Gastrocnemius medialis (tissue), 4 donors: ENCODE measurements at regions of chr7 and their contacts with region 1.

Region 1: DNA sequence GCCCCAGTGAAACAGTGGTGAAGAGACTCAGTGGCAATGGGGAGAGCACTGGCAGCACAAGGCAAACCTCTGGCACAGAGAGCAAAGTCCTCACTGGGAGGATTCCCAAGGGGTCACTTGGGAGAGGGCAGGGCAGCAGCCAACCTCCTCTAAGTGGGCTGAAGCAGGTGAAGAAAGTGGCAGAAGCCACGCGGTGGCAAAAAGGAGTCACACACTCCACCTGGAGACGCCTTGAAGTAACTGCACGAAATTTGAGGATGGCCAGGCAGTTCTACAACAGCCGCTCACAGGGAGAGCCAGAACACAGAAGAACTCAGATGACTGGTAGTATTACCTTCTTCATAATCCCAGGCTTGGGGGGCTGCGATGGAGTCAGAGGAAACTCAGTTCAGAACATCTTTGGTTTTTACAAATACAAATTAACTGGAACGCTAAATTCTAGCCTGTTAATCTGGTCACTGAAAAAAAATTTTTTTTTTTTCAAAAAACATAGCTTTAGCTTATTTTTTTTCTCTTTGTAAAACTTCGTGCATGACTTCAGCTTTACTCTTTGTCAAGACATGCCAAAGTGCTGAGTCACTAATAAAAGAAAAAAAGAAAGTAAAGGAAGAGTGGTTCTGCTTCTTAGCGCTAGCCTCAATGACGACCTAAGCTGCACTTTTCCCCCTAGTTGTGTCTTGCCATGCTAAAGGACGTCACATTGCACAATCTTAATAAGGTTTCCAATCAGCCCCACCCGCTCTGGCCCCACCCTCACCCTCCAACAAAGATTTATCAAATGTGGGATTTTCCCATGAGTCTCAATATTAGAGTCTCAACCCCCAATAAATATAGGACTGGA is 435 bp upstream of the IL6 start:
- DNase-seq: peak; percentile 45 to 66
- ATAC-seq: peak; percentile 86
- H3K4me3 ChIP-seq: peak overlapping the region; percentile 35 to 69 (median 40)
- H3K27ac ChIP-seq: peak overlapping the region; percentile 29 to 71 (median 46)
- H3K4me1 ChIP-seq: peaks cover 49 to 55% of the 10 kb centered on the region in 2 donors
- H3K27me3 ChIP-seq: no peaks in the 10 kb centered on the region
- CTCF ChIP-seq: peak; percentile 34 to 59 (median 59)
- POLR2A ChIP-seq: no peak

Region 2: GRCh38 chr7:22452142-22452959 is 274.2 kb before region 1 on chr7:
- in situ Hi-C with region 1: no loop called
- intact Hi-C with region 1: no loop called
- DNase-seq: peak in 1 of 2 donors; percentile 18
- ATAC-seq: peak; percentile 58 to 65
- H3K4me3 ChIP-seq: peak overlapping the region; percentile 6 to 40 (median 18)
- H3K27ac ChIP-seq: no peak overlapping the region
- H3K4me1 ChIP-seq: peaks cover 3% of the 10 kb centered on the region in 2 donors
- H3K27me3 ChIP-seq: no peaks in the 10 kb centered on the region
- CTCF ChIP-seq: peak; percentile 33 to 79 (median 51)
- POLR2A ChIP-seq: no peak

Region 3: DNA sequence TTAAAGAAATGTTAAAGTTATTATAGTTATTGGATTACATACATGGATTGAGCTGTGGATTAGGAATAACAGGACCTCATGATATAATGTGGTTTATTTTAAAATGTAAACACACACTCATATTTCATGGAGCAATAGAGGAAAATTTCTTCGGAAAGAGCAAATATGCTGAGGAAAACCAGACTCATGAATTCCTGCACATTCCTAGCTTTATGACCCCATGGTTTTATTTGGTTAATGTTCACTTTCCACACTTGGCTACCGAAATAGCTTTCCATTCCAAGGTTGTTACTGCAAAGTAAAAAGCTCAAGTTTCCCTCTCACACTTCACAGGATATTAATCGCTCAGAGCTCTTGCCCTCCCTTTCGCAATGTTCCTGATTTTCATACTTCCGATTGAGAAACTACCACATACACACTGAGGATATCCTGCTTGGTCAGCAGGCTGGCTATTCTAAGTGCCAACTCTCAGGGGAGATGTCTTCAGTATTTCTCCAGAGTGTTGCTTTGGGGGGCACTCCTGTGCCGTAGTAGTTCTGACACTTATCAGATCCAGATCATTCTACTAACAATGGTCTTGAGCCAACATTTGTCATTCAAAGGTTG is 149.1 kb before region 1 on chr7:
- in situ Hi-C with region 1: no loop called
- intact Hi-C with region 1: loop called (anchors 1 kb)
- DNase-seq: peak; percentile 52 to 59
- ATAC-seq: peak; percentile 99 to 100
- H3K4me3 ChIP-seq: no peak overlapping the region
- H3K27ac ChIP-seq: peak overlapping the region; percentile 54 to 66 (median 58)
- H3K4me1 ChIP-seq: peaks cover 15 to 19% of the 10 kb centered on the region in 2 donors
- H3K27me3 ChIP-seq: no peaks in the 10 kb centered on the region
- CTCF ChIP-seq: no peak
- POLR2A ChIP-seq: no peak

Region 4: GRCh38 chr7:22860784-22861482 is 134.4 kb after region 1 on chr7:
- in situ Hi-C with region 1: no loop called
- intact Hi-C with region 1: loop called (anchors 2 kb)
- DNase-seq: no peak
- ATAC-seq: peak; percentile 43 to 52
- H3K4me3 ChIP-seq: no peak overlapping the region
- H3K27ac ChIP-seq: peak overlapping the region; percentile 63 to 99 (median 88)
- H3K4me1 ChIP-seq: peaks cover 43 to 44% of the 10 kb centered on the region in 2 donors
- H3K27me3 ChIP-seq: no peaks in the 10 kb centered on the region
- CTCF ChIP-seq: peak; percentile 54 to 79 (median 59)
- POLR2A ChIP-seq: no peak